PC-3 (cell line): ENCODE measurements at regions of chr2 and their contacts with region 1.

Region 1: GRCh38 chr2:75729861-75730260 is 19.1 kb upstream of the GCFC2 start:
- DNase-seq: peak; percentile 66
- ATAC-seq: no peak
- H3K4me3 ChIP-seq: no peak overlapping the region
- H3K27ac ChIP-seq: no peak overlapping the region
- H3K4me1 ChIP-seq: no peaks in the 10 kb centered on the region
- H3K27me3 ChIP-seq: peaks cover 23% of the 10 kb centered on the region
- CTCF ChIP-seq: peak; percentile 73

Region 2: GRCh38 chr2:75450068-75450467 is 279.8 kb before region 1 on chr2:
- CTCF ChIA-PET with region 1: no interaction called
- POLR2A ChIA-PET with region 1: no interaction called
- intact Hi-C with region 1: no loop called
- DNase-seq: no peak
- ATAC-seq: no peak
- H3K4me3 ChIP-seq: no peak overlapping the region
- H3K27ac ChIP-seq: no peak overlapping the region
- H3K4me1 ChIP-seq: no peaks in the 10 kb centered on the region
- H3K27me3 ChIP-seq: no peaks in the 10 kb centered on the region
- CTCF ChIP-seq: no peak

Region 3: DNA sequence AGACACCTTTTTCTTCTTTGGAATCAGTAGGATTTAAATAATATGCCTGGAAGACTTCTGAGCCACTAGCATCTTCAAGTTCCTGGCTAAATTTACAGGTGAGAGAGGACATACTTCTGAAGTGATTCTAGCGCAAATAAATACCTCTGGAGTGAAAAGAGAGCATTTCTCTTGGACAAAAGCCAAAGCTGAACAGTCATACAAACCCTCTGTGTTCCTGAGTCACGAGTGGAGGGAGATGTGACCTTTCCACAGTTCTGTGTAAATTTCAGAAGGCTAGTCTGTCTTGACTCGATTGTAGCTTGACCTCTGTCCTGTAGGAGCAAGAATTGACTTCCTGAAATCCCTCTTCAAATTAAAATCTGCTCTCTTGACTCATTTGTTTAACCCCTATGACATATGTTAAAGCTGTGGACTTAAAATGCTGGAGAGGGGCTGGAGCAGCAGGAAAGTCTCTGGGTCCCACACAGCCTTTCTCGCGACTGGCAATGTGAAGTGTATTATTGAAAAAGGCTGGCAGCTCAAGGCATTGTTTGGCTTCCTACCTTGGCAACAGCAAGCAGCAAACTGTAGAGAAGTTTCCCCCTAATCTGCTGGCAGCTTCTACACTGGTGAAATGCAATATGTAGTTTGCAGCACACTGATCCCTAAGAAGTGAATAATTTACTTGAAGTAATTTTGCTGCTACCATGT is 60.4 kb after region 1 on chr2:
- CTCF ChIA-PET with region 1: no interaction called
- POLR2A ChIA-PET with region 1: no interaction called
- intact Hi-C with region 1: no loop called
- DNase-seq: peak; percentile 80
- ATAC-seq: peak; percentile 18
- H3K4me3 ChIP-seq: peak overlapping the region; percentile 25; the same call in 1 of the 2 replicates
- H3K27ac ChIP-seq: peak overlapping the region; percentile 29
- H3K4me1 ChIP-seq: peaks cover 31% of the 10 kb centered on the region
- H3K27me3 ChIP-seq: no peaks in the 10 kb centered on the region
- CTCF ChIP-seq: no peak

Region 4: GRCh38 chr2:76599732-76600368 is 870.0 kb after region 1 on chr2:
- CTCF ChIA-PET with region 1: no interaction called
- POLR2A ChIA-PET with region 1: no interaction called
- intact Hi-C with region 1: loop called (anchors 2 kb)
- DNase-seq: peak; percentile 84
- ATAC-seq: peak; percentile 85
- H3K4me3 ChIP-seq: no peak overlapping the region
- H3K27ac ChIP-seq: no peak overlapping the region
- H3K4me1 ChIP-seq: no peaks in the 10 kb centered on the region
- H3K27me3 ChIP-seq: no peaks in the 10 kb centered on the region
- CTCF ChIP-seq: peak; percentile 89